Activated CD4-positive, alpha-beta T cell treated with anti-CD3 and anti-CD28 coated beads, Interleukin-2, amount 10 ng/mL, durations not matched to agents 24 days and 14 days (primary cell): ENCODE measurements at regions of chr3 and their contacts with region 1.

Region 1: GRCh38 chr3:151227807-151228665 is 25.0 kb upstream of the GPR171 start:
- DNase-seq: peak; percentile 94
- H3K4me3 Mint-ChIP-seq: peak overlapping the region; percentile 44
- H3K27ac Mint-ChIP-seq: peak overlapping the region; percentile 74
- H3K4me1 Mint-ChIP-seq: peaks cover 56% of the 10 kb centered on the region
- H3K27me3 Mint-ChIP-seq: no peaks in the 10 kb centered on the region

Region 2: DNA sequence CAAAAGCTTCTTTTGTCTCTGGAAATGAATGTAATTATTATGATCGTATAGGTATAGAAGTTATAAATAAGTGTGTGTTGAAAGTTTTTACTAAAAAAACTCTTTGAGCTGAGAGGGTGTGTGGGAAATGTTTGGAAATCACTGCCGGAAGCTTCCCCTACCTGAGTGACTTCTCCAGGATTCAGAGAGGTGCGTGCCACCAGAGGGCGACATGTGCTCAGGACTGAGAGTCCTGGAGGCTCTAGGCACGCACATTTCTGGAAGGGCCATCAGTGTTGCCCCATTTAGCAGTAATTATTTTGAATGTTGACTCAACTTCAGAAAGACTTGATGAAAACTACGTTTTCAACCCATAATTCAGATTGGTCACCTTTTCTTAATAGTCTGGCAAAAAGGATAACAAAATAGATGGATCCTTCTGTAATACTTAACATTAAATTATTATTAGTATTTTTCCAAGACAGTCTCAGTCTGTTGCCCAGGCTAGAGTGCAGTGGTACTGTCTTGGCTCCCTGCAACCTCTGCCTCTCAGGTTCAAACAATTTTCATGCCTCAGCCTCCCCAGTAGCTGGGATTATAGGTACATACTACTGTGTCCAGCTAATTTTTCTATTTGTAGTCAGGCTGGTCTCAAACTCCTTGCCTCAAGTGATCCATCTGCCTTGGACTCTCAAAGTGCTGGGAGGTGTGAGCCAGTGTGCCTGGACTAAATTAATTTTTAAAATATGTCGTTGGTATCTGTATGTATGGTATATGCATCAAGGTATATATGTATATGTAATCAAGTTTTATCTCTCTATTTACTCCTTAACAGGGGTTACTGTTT is 59.6 kb before region 1 on chr3:
- intact Hi-C with region 1: loop called (anchors 1 kb)
- DNase-seq: peak; percentile 94
- H3K4me3 Mint-ChIP-seq: no peak overlapping the region
- H3K27ac Mint-ChIP-seq: no peak overlapping the region
- H3K4me1 Mint-ChIP-seq: peaks cover 41% of the 10 kb centered on the region
- H3K27me3 Mint-ChIP-seq: peaks cover 1% of the 10 kb centered on the region

Region 3: GRCh38 chr3:151210676-151211381 is 17.2 kb before region 1 on chr3:
- intact Hi-C with region 1: loop called (anchors 1 kb)
- DNase-seq: peak; percentile 75
- H3K4me3 Mint-ChIP-seq: peak overlapping the region; percentile 76
- H3K27ac Mint-ChIP-seq: peak overlapping the region; percentile 90
- H3K4me1 Mint-ChIP-seq: peaks cover 56% of the 10 kb centered on the region
- H3K27me3 Mint-ChIP-seq: no peaks in the 10 kb centered on the region

Region 4: DNA sequence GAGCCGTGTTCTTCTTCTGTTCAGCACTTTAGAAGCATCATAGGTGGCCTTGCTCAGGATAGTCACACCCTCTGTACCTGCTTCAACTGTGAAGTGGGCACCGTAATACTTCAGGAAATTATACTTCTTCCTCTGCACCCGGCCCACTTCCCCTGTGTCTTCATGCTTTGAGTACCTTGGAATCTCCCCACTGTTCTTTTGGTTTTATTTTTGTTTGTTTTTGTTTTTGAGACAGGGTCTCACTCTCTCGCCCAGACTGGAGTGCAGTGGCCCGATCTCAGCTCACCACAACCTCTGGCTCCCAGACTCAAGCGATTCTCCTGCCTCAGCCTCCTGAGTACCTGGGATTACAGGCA is 48.6 kb after region 1 on chr3:
- intact Hi-C with region 1: loop called (anchors 1 kb)
- DNase-seq: peak; percentile 83
- H3K4me3 Mint-ChIP-seq: peak overlapping the region; percentile 76
- H3K27ac Mint-ChIP-seq: peak overlapping the region; percentile 85
- H3K4me1 Mint-ChIP-seq: peaks cover 59% of the 10 kb centered on the region
- H3K27me3 Mint-ChIP-seq: no peaks in the 10 kb centered on the region

Region 5: GRCh38 chr3:151305101-151305750 is 77.2 kb after region 1 on chr3:
- intact Hi-C with region 1: loop called (anchors 2 kb)
- DNase-seq: peak; percentile 65
- H3K4me3 Mint-ChIP-seq: peak overlapping the region; percentile 13
- H3K27ac Mint-ChIP-seq: peak overlapping the region; percentile 80
- H3K4me1 Mint-ChIP-seq: peaks cover 50% of the 10 kb centered on the region
- H3K27me3 Mint-ChIP-seq: peaks cover 2% of the 10 kb centered on the region

Region 6: DNA sequence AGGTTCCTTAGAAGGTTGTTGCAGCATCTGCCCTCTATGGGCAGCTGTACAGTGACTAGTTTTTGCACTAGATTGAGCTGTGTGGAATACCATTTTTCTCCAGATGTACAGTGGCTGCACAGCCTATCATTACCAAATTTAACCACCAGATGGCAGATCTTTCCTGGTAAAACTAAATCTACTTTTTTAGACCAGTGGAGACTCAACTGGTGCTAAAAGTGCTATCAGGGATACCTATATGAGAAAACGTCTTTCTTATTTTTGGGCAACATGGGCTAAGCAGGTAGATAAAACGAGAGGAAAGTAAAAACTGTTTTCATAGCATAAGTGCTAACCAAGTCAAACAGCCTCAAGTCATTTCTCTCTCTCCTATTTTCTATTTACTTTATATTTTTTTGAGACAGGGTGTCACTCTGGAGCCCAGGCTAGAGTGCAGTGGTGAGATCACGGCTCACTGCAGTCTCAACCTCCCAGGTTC is 211.7 kb after region 1 on chr3:
- intact Hi-C with region 1: loop called (anchors 1 kb)
- DNase-seq: peak; percentile 70
- H3K4me3 Mint-ChIP-seq: no peak overlapping the region
- H3K27ac Mint-ChIP-seq: no peak overlapping the region
- H3K4me1 Mint-ChIP-seq: no peaks in the 10 kb centered on the region
- H3K27me3 Mint-ChIP-seq: peaks cover 6% of the 10 kb centered on the region

Region 7: GRCh38 chr3:151918253-151919029 is 690.4 kb after region 1 on chr3:
- intact Hi-C with region 1: loop called (anchors 5 kb)
- DNase-seq: no peak
- H3K4me3 Mint-ChIP-seq: no peak overlapping the region
- H3K27ac Mint-ChIP-seq: no peak overlapping the region
- H3K4me1 Mint-ChIP-seq: no peaks in the 10 kb centered on the region
- H3K27me3 Mint-ChIP-seq: peaks cover 6% of the 10 kb centered on the region